ENCODE measurements at regions of chr2 and their contacts with region 1.

Region 1: GRCh38 chr2:126527836-126528507 is 128.0 kb upstream of the GYPC start:
- DNase-seq: peak; percentile 82
- H3K4me3 Mint-ChIP-seq: no peak overlapping the region
- H3K27ac Mint-ChIP-seq: no peak overlapping the region
- H3K4me1 Mint-ChIP-seq: no peaks in the 10 kb centered on the region
- H3K27me3 Mint-ChIP-seq: no peaks in the 10 kb centered on the region

Region 2: GRCh38 chr2:126496493-126496892 is 31.5 kb before region 1 on chr2:
- CTCF ChIA-PET with region 1: no interaction called
- DNase-seq: no peak
- H3K4me3 Mint-ChIP-seq: no peak overlapping the region
- H3K27ac Mint-ChIP-seq: no peak overlapping the region
- H3K4me1 Mint-ChIP-seq: no peaks in the 10 kb centered on the region
- H3K27me3 Mint-ChIP-seq: no peaks in the 10 kb centered on the region

Region 3: DNA sequence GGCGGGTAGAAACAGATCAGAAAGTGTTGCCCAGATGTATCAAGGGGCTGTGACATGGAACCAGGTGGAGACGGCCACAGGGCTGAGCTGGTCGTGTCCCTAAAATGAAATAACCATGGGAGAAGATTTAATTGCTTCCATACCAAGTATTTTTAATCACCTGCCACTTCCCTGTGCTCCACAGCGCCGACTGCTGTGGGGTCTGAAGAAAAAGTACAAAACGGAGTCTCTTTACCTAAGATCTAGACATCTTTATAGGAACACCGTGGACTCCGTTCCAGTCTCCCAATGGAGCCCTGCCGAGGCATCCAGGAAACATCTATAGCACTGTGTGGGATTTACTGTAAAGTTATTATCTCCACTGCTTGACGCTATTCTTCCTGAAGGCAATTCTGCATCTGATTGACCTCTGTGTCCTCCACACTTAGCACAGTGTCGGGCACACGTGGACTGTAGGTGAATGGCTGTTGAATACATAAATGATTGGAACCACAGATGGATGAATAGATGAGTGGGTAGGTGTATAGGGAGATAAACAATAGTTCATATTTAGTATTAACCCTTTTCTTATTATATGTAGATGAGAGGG is 106.4 kb after region 1 on chr2:
- CTCF ChIA-PET with region 1: interaction called, 17 read pairs
- DNase-seq: peak; percentile 37
- H3K4me3 Mint-ChIP-seq: no peak overlapping the region
- H3K27ac Mint-ChIP-seq: no peak overlapping the region
- H3K4me1 Mint-ChIP-seq: no peaks in the 10 kb centered on the region
- H3K27me3 Mint-ChIP-seq: peaks cover 18% of the 10 kb centered on the region

Region 4: GRCh38 chr2:126776692-126777619 is 249.0 kb after region 1 on chr2:
- CTCF ChIA-PET with region 1: interaction called, 88 read pairs
- DNase-seq: peak; percentile 85
- H3K4me3 Mint-ChIP-seq: peak overlapping the region; percentile 94
- H3K27ac Mint-ChIP-seq: peak overlapping the region; percentile 83
- H3K4me1 Mint-ChIP-seq: peaks cover 19% of the 10 kb centered on the region
- H3K27me3 Mint-ChIP-seq: peaks cover 63% of the 10 kb centered on the region